ENCODE measurements at regions of chr11 and their contacts with region 1.

Region 1: GRCh38 chr11:125224391-125225010 is 60.0 kb downstream of the PKNOX2 start:
- DNase-seq: no peak
- ATAC-seq: peak; percentile 76

Region 2: GRCh38 chr11:125091247-125091876 is 133.1 kb before region 1 on chr11:
- intact Hi-C with region 1: no loop called
- DNase-seq: no peak
- ATAC-seq: peak; percentile 88

Region 3: GRCh38 chr11:125164422-125165110 is 59.9 kb before region 1 on chr11 and contains the start of gene PKNOX2:
- intact Hi-C with region 1: loop called (anchors 2 kb)
- DNase-seq: peak; percentile 84
- ATAC-seq: peak; percentile 83
- total RNA-seq, gene PKNOX2: 9.1 TPM